Astrocyte of the cerebellum (primary cell): ENCODE measurements at regions of chr17 and their contacts with region 1.

Region 1: GRCh38 chr17:28178800-28179199 is 136.3 kb downstream of the NLK start:
- DNase-seq: no peak
- H3K4me3 ChIP-seq: no peak overlapping the region
- CTCF ChIP-seq: no peak

Region 2: GRCh38 chr17:28078341-28079229 is 100.2 kb before region 1 on chr17:
- in situ Hi-C with region 1: loop called (anchors 5 kb)
- DNase-seq: no peak
- H3K4me3 ChIP-seq: no peak overlapping the region
- CTCF ChIP-seq: no peak

Region 3: DNA sequence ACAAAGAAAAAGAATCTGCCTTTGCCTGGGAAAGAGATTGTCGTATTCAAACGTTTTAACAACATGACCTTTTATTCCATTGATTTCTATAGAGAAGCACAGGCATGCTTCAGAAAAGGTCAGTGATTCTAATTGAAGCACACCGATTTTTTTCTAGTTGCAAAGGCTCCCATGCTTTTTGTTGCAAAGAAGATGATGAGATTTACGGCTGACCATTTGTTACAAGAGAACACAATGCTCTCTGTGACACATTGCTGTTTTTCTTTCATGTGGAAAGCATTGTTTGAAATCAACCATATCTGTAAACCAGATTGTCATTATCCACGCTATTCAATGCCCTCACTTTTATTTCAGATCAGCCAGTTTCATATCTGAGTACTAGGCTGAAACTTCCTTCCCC is 36.5 kb before region 1 on chr17:
- in situ Hi-C with region 1: loop called (anchors 5 kb)
- DNase-seq: no peak
- H3K4me3 ChIP-seq: no peak overlapping the region
- CTCF ChIP-seq: no peak

Region 4: DNA sequence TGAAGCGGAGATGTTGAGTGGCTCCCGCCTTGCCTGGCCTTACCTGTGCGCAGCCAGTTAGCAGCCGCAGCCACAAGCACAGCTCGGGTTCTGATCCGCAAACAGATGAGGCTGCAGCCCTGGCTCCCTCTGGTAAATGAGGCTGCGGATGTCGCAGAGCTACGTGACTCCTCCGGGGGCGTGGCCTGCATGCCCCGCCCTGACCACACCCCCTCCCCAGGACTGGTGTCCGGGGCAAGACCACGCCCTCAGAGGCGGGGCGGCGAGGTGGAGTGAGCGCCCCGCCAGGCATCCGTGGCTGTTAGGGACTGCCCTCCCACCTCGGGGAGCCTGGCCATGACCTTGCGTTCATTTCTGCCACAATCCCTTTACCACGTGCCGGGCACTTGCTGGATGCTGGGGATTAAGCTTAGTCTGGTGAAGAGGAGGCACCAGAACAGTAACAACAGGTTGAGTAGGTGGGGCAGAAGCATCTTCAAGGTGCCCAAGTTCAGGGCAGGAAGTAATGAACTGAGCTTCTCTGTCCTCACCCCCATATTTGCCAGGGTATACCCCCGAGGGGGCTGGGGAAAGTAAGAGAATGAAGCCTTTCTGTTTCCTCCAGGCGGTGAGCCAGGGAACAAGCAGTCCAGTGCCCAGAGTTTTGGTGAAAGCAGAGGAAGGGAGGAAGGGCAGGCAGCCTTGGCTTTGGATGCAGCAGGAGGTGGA is 398.1 kb after region 1 on chr17 and contains the start of gene ALDOC:
- in situ Hi-C with region 1: no loop called
- DNase-seq: peak; percentile 55
- H3K4me3 ChIP-seq: peak within 1 kb of the TSS; percentile 35
- CTCF ChIP-seq: no peak